ENCODE measurements at regions of chr6 and their contacts with region 1.

Region 1: DNA sequence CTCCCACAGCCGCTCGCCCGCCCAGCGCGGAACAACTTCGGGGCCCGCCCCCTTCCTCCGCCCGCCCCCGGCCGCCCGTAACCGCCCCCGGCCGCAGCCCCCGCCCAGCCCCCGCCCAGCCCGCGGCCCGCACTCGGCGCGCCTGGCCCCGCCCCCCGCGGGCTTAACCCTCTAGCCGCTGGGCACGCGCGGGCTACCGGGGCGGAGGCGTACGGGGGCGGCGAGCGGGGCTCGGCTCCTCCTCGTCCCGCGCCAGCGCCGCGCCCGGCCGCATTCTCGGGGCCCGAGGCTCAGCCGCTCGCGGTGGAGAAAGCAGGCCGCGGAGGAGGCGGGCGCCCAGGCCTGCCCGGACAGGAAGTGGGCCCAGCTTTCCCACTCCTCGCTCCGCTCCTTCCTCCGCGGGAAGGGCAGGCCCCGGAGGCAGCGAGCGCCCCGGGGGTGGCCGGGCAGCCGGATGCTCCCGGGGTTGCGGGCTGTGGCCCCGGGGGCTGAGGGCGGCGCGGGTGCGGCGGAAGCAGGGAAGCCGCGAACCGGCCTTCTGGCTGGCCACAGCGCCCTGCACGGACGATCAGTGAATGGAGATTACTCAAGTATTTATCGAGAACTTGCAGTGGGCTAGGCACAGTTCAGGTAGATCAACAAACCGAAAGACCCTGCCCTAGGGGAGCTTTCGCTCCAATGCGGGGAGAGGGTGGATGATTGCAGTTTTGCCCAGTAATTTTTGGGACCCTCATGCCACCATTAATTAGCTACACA is at the start of gene TRAM2:
- DNase-seq: peak; percentile 89 to 95 (median 94)
- ATAC-seq: peak; percentile 82
- H3K4me3 ChIP-seq: peak within 1 kb of the TSS; percentile 77
- H3K27ac ChIP-seq: peak within 1 kb of the TSS; percentile 85
- H3K4me1 ChIP-seq: peaks cover 22 to 30% of the 10 kb centered on the region in 2 experiments; a peak in 4 of 5 replicates
- H3K27me3 ChIP-seq: no peaks in the 10 kb centered on the region
- CTCF ChIP-seq: peak; percentile 18 to 28 (median 26); a peak in 2 of 6 replicates
- EP300 ChIP-seq: no peak; the same call in 1 of the 2 replicates
- POLR2A ChIP-seq: peak; percentile 80
- RAD21 ChIP-seq: peak in 1 of 2 experiments; percentile 31; a peak in 2 of 4 replicates
- polyA plus RNA-seq, gene TRAM2: 2.6 to 2.8 TPM

Region 2: DNA sequence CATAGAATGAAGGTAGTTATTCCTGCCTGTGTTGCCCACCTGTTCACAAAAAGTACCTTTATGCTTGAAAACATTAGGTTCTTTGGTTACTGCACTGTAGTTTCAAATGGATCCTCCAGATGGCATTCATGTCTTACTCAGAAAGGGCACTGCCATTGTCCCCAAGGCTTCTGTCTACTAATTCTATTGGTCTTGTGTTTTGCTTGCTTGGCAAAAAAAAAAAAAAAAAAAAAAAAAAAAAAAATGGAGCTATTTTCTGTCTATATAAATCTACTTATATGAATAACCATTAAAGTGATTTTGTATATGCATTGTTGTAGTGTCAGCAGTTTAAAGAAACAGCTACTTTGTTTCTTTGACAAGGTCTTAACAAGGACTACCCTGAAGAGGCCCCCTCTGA is 169.7 kb before region 1 on chr6:
- CTCF ChIA-PET with region 1: no interaction called
- POLR2A ChIA-PET with region 1: no interaction called
- in situ Hi-C with region 1: no loop called
- intact Hi-C with region 1: no loop called
- DNase-seq: peak; percentile 24 to 57 (median 42)
- ATAC-seq: peak; percentile 77
- H3K4me3 ChIP-seq: no peak overlapping the region
- H3K27ac ChIP-seq: no peak overlapping the region
- H3K4me1 ChIP-seq: peaks cover 0 to 4% of the 10 kb centered on the region in 2 experiments; a peak in 1 of 5 replicates
- H3K27me3 ChIP-seq: no peaks in the 10 kb centered on the region; a peak in 1 of 5 replicates
- CTCF ChIP-seq: peak; percentile 49 to 71 (median 52); a peak in 4 of 6 replicates
- EP300 ChIP-seq: no peak
- POLR2A ChIP-seq: no peak
- RAD21 ChIP-seq: peak; percentile 58 to 77

Region 3: GRCh38 chr6:52503848-52504781 is 73.1 kb before region 1 on chr6:
- CTCF ChIA-PET with region 1: no interaction called
- POLR2A ChIA-PET with region 1: no interaction called
- in situ Hi-C with region 1: no loop called
- intact Hi-C with region 1: loop called (anchors 2 kb)
- DNase-seq: peak; percentile 90 to 92 (median 90)
- ATAC-seq: peak; percentile 95
- H3K4me3 ChIP-seq: no peak overlapping the region
- H3K27ac ChIP-seq: peak overlapping the region; percentile 73
- H3K4me1 ChIP-seq: peaks cover 33 to 49% of the 10 kb centered on the region in 2 experiments
- H3K27me3 ChIP-seq: no peaks in the 10 kb centered on the region
- CTCF ChIP-seq: no peak; a peak in 1 of 6 replicates
- EP300 ChIP-seq: peak; percentile 68; the same call in 1 of the 2 replicates
- POLR2A ChIP-seq: no peak; the same call in 1 of the 2 replicates
- RAD21 ChIP-seq: no peak; a peak in 1 of 4 replicates

Region 4: DNA sequence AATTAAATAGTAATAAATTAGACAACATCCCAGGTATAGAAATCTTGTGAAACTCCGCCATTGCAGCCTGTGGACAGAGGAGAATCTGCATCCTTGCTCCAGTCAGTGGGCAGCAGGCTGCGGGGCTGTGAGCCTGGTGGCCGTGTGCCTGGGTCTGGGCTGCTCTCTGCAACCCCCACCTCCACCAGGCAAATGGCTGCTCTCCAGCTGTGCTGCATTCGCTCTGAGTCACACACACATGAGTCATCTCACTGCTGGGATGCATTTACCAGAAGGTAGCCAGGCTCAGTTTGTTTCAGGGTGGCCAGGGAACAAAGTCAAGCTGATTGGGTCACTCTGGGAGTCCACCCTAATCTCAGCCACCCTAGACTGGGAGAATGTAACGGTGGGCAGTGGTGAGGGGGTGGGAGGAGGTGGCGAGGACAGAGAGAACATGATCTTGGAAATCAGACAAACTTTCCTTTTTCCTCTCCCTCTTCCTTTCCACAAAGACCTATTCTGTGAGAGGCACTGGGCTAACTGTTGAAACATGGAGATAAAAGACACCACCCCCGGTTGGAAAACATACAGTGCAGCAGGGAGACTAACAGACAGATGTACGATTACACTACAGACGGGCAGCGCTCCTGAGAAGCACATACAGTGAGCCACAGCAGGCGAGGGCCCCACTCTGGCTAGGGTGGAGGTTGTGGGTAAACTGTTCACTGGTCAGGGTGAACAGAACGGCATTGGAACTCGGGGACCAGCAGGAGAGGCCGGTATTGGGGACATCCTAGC is 59.5 kb before region 1 on chr6:
- CTCF ChIA-PET with region 1: no interaction called
- POLR2A ChIA-PET with region 1: no interaction called
- in situ Hi-C with region 1: no loop called
- intact Hi-C with region 1: loop called (anchors 5 kb)
- DNase-seq: peak; percentile 82 to 92 (median 86)
- ATAC-seq: peak; percentile 97
- H3K4me3 ChIP-seq: peak overlapping the region; percentile 23
- H3K27ac ChIP-seq: peak overlapping the region; percentile 90
- H3K4me1 ChIP-seq: peaks cover 29 to 51% of the 10 kb centered on the region in 2 experiments
- H3K27me3 ChIP-seq: no peaks in the 10 kb centered on the region
- CTCF ChIP-seq: 0 out of 6 replicates have a peak, but pooled peaks of 1 of the 3 experiments have one; percentile 6
- EP300 ChIP-seq: peak; percentile 68
- POLR2A ChIP-seq: peak; percentile 76
- RAD21 ChIP-seq: peak in 1 of 2 experiments; percentile 26; a peak in 2 of 4 replicates

Region 5: DNA sequence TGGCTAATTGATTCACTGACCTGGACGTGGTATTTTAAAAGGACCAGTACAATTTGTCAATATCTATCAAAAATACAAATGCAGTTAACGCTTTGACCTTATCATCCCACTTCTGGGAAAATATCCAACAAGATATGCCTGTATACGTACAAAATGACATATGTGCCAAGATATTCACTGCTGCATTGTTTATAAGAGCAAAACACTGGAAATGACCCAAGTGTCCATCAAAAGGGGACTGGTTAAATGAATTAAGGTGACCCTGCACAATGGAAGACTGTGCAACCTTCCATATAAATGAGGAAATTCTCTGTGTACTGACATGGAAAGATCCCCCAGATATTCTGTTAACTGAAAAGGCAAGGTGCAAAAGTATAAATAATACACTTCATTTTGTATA is 14.3 kb before region 1 on chr6:
- CTCF ChIA-PET with region 1: no interaction called
- POLR2A ChIA-PET with region 1: interaction called, 10 read pairs
- in situ Hi-C with region 1: no loop called
- intact Hi-C with region 1: no loop called
- DNase-seq: no peak
- ATAC-seq: no peak
- H3K4me3 ChIP-seq: no peak overlapping the region
- H3K27ac ChIP-seq: no peak overlapping the region
- H3K4me1 ChIP-seq: peaks cover 3 to 10% of the 10 kb centered on the region in 2 experiments
- H3K27me3 ChIP-seq: no peaks in the 10 kb centered on the region
- CTCF ChIP-seq: no peak
- EP300 ChIP-seq: no peak
- POLR2A ChIP-seq: no peak
- RAD21 ChIP-seq: no peak

Region 6: DNA sequence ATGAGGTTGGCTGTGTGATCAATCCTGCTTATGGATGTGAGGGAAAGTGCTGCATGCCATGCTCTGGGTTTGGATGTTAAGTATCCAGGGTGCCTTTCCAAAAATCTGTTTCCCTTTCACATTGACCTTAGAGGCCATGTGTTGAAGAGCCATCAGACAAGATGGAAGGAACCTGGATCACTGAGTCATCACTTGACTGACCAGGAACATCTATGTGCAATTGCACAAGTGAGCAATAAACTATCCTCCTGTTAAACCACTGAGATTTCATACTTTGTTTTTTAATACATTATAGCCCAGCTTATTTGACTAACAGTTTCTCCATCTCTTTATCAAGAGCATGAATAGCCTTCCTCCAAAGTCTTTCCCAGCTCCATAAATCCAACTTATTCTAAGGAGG is 76.0 kb after region 1 on chr6:
- CTCF ChIA-PET with region 1: no interaction called
- POLR2A ChIA-PET with region 1: no interaction called
- in situ Hi-C with region 1: no loop called
- intact Hi-C with region 1: loop called (anchors 2 kb)
- DNase-seq: no peak
- ATAC-seq: no peak
- H3K4me3 ChIP-seq: no peak overlapping the region
- H3K27ac ChIP-seq: no peak overlapping the region
- H3K4me1 ChIP-seq: no peaks in the 10 kb centered on the region; a peak in 2 of 5 replicates
- H3K27me3 ChIP-seq: peaks cover 0 to 4% of the 10 kb centered on the region in 2 experiments; a peak in 1 of 5 replicates
- CTCF ChIP-seq: no peak
- EP300 ChIP-seq: no peak
- POLR2A ChIP-seq: no peak
- RAD21 ChIP-seq: no peak